AG04449 (cell line): ENCODE measurements at regions of chr7 and their contacts with region 1.

Region 1: GRCh38 chr7:7681179-7681935 is 37.0 kb downstream of the RPA3 start:
- DNase-seq: no peak
- H3K4me3 ChIP-seq: no peak overlapping the region
- CTCF ChIP-seq: peak; percentile 16

Region 2: DNA sequence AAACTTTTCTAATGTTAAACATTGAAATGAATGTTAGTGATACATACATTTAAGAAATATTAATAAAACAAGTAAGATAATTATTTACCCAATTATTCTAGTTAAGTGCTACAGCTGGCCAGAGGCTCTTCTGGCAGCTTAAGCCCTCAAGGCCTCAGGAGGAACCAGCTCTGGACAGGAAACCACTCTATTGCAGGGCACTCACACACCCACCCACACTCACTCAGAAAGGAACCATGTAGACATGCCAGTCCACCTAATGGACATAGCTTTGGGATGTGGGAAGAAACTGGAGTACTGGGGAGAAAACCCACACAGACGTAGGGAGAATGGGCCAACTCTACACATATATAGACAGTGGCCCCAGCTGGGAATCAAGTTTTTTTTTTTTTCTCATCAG is 12.7 kb before region 1 on chr7:
- CTCF ChIA-PET with region 1: interaction called, 20 read pairs
- POLR2A ChIA-PET with region 1: no interaction called
- DNase-seq: no peak
- H3K4me3 ChIP-seq: no peak overlapping the region
- CTCF ChIP-seq: no peak

Region 3: GRCh38 chr7:7739204-7740036 is 58.1 kb after region 1 on chr7:
- CTCF ChIA-PET with region 1: interaction called, 10 read pairs
- POLR2A ChIA-PET with region 1: no interaction called
- DNase-seq: no peak
- H3K4me3 ChIP-seq: no peak overlapping the region
- CTCF ChIP-seq: no peak

Region 4: DNA sequence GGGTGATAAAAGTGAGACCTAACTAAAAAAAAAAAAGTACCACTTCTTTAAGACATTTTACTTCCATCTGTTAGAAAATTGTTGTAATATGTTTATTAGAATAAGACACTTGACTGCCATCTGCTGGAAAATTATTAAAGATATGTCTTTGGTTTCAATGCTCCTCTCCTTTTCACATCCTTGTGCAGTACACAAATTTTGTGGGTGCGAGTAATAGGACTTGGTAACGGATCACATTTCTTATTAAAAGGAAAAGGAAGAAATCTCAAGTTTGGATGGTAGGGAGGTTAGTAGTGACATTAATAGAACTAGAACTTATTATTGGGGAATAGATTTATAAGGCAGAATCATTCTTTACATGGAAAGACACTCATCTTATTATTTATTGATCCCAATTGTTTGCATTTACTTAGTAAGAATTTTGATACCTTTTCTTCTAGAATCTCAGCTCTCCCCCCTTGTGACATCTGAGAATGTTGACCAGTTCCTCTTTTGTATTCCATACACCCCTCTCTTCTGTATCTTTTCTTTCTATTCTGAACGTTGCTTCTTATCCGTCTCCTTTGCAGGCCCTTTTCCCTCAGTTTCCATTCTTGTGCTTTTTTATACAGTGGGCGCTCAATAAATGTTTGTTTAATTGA is 80.1 kb after region 1 on chr7:
- CTCF ChIA-PET with region 1: interaction called, 144 read pairs
- POLR2A ChIA-PET with region 1: no interaction called
- DNase-seq: no peak
- H3K4me3 ChIP-seq: peak overlapping the region; percentile 53
- CTCF ChIP-seq: no peak

Region 5: DNA sequence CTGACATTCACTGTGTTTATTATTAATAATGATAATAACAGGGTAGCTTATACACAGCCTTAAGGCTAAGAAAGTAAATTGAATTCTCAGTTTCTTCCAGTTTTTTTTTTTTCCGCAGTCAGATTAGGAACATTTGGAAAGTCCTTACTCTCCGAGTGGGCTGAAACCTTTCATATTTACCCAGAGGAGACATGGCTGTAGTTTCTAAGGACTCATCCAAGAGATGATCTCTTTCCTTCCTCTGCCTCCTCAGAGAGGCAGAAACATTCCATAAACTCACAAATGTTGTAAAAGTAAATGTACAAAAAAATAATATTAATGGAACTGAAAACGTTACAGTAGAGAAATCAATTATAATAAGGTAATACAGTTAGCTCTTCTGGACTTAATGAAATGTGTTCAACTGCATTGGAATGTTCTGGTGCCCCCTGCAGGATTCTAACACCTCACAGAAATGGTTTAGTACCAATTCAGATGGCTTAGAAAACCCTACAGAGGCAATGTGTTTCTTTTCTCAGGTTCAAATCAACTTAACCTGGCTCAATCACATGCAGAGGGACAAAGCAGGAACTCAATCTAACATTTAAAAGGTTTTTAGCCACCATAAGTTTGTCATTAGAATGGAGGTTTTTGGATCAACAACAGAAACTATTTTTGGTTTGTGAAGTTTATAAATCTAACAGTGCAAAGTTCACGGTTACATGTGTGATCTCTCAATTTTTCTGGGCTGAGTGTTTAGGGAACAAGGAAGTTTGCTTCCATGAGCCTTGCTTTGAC is 508.9 kb after region 1 on chr7:
- CTCF ChIA-PET with region 1: interaction called, 25 read pairs
- POLR2A ChIA-PET with region 1: no interaction called
- DNase-seq: no peak
- H3K4me3 ChIP-seq: no peak overlapping the region
- CTCF ChIP-seq: peak; percentile 53